ENCODE measurements at regions of chr19 and their contacts with region 1.

Region 1: GRCh38 chr19:43463381-43464136 is 1.8 kb downstream of the LYPD3 start:
- DNase-seq: peak; percentile 73
- ATAC-seq: peak; percentile 97
- H3K4me3 ChIP-seq: peak overlapping the region; percentile 77
- H3K27ac ChIP-seq: no peak overlapping the region
- H3K4me1 ChIP-seq: peaks cover 8% of the 10 kb centered on the region; the same call in 1 of the 2 replicates
- H3K27me3 ChIP-seq: no peaks in the 10 kb centered on the region
- CTCF ChIP-seq: no peak
- EP300 ChIP-seq: no peak
- POLR2A ChIP-seq: no peak
- RAD21 ChIP-seq: no peak

Region 2: GRCh38 chr19:43503501-43504425 is 40.2 kb after region 1 on chr19:
- CTCF ChIA-PET with region 1: interaction called, 9 read pairs
- POLR2A ChIA-PET with region 1: interaction called, 3 read pairs
- RAD21 ChIA-PET with region 1: interaction called, 4 read pairs
- SMC1A ChIA-PET with region 1: no interaction called
- in situ Hi-C with region 1: no loop called
- intact Hi-C with region 1: loop called (anchors 5 kb)
- DNase-seq: peak; percentile 78
- ATAC-seq: peak; percentile 96
- H3K4me3 ChIP-seq: peak overlapping the region; percentile 67
- H3K27ac ChIP-seq: peak overlapping the region; percentile 73
- H3K4me1 ChIP-seq: peaks cover 4% of the 10 kb centered on the region
- H3K27me3 ChIP-seq: no peaks in the 10 kb centered on the region
- CTCF ChIP-seq: peak in 2 of 3 experiments; percentile 30 to 46; a peak in 4 of 6 replicates
- EP300 ChIP-seq: no peak
- POLR2A ChIP-seq: peak; percentile 75
- RAD21 ChIP-seq: no peak

Region 3: DNA sequence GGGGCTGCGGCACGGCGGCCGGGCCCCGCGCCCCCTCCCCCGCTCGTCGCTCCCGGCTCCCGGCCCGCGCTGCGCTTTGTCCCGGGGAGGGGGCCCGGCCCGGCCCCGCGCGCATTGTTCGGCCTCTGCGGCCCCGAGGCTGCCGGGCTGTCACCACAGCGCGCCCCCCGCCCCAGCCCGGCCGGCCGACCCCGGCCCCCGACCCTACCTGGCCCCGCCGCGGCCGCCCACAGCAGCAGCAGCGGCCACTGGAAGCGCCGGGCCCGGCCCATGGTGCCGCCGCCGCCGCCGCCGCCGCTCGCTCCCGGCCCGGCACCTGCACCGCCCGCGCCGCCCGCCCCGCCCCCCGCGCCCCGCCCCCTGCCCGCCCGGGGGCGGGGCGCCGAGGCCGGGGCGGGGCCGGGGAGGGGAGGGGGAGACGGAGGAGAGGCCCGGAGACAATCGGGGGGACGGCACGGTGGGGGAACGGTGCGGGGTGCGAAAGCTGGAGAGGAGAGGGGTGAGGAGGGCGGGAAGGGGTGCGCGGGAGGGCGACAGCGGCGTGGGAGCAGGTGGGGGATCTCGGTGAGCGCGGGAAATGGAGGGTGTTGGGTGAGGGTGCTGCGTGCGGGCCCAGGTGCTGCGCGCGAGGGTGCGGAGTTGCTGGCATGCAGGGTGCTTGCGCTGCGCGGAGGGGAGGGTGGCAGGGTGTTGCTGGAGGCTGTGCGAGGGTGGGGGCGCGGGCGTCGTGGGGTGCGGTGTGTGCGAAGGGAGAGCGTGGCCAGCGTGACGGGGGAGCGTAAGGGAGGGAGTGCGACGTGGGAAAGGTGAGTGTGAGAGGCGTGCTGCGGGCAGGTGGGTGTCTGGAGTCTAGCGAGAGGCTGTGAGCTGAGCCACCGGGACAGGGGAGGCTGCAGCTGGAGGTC is 176.2 kb after region 1 on chr19 and contains the start of gene CADM4:
- CTCF ChIA-PET with region 1: no interaction called
- POLR2A ChIA-PET with region 1: no interaction called
- RAD21 ChIA-PET with region 1: no interaction called
- SMC1A ChIA-PET with region 1: no interaction called
- in situ Hi-C with region 1: no loop called
- intact Hi-C with region 1: no loop called
- DNase-seq: no peak
- ATAC-seq: no peak; the same call in 2 of the 3 replicates
- H3K4me3 ChIP-seq: peak within 1 kb of the TSS; percentile 32; the same call in 1 of the 2 replicates
- H3K27ac ChIP-seq: no peak within 1 kb of the TSS
- H3K4me1 ChIP-seq: peaks cover 5% of the 10 kb centered on the region
- H3K27me3 ChIP-seq: peaks cover 10 to 19% of the 10 kb centered on the region in 2 experiments
- CTCF ChIP-seq: no peak
- EP300 ChIP-seq: no peak
- POLR2A ChIP-seq: no peak
- RAD21 ChIP-seq: no peak
- polyA plus RNA-seq, gene CADM4: not detected

Measured in GM12878 (cell line).